ENCODE measurements at regions of chr15 and their contacts with region 1.

Region 1: GRCh38 chr15:78241007-78241406 is 6.6 kb upstream of the ACSBG1 start:
- DNase-seq: peak; percentile 85
- ATAC-seq: peak; percentile 94 to 97

Region 2: GRCh38 chr15:77784395-77785292 is 456.4 kb before region 1 on chr15:
- intact Hi-C with region 1: no loop called
- DNase-seq: no peak
- ATAC-seq: peak in 1 of 2 donors; percentile 19

Region 3: DNA sequence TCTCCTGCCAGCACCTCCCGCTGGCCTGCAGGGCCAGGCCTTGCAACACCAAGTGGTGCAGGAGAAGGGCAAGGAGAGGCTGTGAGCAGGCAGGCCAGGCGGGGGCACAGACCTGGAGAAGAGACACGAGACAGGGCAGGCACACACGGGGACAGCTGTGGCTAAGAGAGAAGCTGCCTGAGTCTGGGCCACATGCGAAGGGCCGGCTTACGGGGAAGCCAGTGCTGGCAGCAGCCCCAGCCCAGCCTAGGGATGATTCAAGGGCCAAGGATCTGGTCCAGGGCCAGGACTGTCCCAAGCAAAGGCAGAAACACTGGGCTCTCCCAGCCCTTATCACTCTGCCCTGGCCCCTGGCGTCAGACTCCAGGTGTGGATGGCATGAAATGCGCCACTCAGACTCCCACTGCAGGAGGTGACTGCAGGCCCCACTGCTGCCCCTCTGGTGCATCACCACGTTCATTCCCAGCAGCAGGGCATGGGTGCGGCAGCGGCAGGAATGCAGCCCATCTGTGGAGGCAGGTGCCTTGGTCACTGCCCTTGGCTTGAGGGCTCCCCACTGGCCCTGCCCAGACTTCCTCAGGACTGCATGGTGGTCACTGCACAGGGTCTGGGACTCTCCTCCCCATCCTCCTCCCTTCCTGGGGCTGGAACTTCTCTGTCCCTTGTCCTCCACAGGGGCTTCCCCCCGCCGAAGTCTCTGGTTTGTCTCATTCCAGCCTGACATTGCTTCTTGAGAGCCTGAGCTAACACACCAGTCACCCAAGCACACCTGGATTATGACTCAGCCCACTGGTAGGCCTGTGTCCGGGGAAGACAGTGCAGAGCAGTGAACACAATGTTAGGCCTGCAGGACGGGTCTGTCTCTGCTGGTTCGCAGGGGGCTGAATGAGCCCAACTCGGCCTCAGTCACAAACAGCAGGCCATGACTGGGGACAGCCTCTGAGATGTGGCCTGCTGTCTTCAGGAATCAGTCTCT is 232.8 kb before region 1 on chr15:
- intact Hi-C with region 1: no loop called
- DNase-seq: peak; percentile 86
- ATAC-seq: peak; percentile 45 to 82

Region 4: DNA sequence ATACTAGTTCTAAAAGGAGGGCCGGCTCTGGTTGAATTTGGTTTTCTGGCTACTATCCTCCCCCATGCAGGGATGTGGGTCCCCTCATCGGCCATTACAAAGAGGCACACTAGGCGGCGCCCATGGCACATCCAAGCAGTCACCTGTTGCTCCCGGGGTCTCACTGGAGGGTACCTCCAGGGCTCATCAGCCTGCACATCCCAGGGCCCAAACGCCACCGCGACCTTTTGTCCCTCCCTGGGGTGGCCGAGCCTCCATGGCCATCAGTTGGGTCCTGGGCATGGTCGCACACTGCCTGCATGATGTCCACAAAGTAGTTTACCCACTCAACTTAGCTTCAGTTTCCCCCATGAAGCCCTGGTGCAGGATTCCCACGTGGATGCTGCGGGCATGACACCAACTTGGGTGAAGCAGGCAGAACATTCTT is 63.5 kb before region 1 on chr15:
- intact Hi-C with region 1: loop called (anchors 1 to 5 kb)
- DNase-seq: no peak
- ATAC-seq: peak; percentile 39 to 70

Region 5: DNA sequence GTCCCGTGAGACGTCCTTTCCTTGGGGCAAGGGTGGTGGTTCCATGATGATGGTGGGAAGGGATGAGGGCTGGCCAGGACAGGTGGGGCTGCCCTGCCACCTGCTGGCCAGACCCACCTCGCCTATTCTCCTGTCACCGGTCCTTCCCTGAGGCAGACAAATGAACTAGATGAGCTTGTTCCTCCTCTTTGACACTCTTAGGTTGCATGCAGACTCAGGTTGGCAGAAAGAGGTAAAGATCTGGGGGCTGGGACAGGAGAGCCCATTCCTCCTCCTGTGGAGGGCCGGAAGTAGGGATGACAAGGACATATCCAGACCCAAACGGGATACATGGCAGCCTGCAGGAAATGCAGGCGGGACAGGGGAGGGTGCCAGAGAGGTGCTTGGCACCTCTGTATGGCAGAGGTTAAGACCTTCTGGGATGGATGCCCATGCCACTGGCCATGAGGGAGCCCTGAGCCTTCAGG is 45.2 kb before region 1 on chr15:
- intact Hi-C with region 1: loop called in 1 of 2 experiments (anchors 5 kb)
- DNase-seq: no peak
- ATAC-seq: peak; percentile 82 to 88

Region 6: GRCh38 chr15:78329625-78330024 is 88.6 kb after region 1 on chr15:
- intact Hi-C with region 1: no loop called
- DNase-seq: no peak
- ATAC-seq: no peak